ENCODE measurements at regions of chr1 and their contacts with region 1.

Region 1: DNA sequence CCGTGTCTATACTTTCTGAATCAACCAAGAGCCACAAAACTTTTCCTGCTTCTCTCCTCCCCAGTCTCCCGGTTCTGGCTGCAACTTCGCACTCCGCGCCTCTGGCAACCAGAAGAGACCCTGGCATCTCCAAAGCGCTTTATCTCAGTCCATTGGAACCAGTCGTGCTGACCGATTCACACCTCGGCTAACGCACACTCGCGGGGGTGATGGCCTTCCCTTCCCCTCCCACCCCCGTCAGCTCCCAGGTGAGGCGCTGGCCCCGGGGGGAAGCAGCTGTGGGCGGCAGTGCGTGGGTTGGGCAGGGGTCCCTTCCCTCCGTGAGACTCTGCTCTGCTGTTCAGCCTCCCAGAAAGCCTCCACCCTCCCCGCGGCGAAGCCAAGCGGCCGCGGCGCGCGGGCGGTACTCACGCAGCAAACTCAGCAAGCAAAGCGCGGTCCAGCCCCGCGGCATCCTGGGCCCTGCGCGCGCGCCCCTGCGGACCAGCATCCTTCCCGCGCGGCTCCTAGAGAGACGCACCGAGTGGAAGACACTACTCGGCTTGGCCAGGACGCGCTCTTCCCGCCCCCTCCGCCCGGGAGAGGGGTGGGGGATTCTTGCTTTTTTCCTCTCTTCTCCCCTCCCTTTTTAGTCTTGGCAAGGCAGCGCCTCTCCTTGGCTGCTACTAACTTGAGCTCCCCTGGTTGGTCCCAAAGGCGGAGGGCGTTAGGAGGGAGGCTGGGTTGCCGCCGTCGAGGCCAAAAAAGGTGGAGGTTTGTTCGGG is at the start of gene CD34:
- DNase-seq: peak; percentile 70 to 84 (median 79)
- ATAC-seq: peak; percentile 46 to 75 (median 68)
- H3K4me3 ChIP-seq: peak within 1 kb of the TSS; percentile 24 to 88 (median 72)
- H3K27ac ChIP-seq: peak within 1 kb of the TSS; percentile 75 to 98 (median 90)
- H3K4me1 ChIP-seq: peaks cover 0 to 61% (median 26%) of the 10 kb centered on the region in 12 donors
- H3K27me3 ChIP-seq: peaks cover 0 to 29% (median 0%) of the 10 kb centered on the region in 9 donors
- CTCF ChIP-seq: no peak
- POLR2A ChIP-seq: peak in 1 of 2 donors; percentile 62
- total RNA-seq, gene CD34: 43.6 to 103 (median 63.8) TPM

Region 2: DNA sequence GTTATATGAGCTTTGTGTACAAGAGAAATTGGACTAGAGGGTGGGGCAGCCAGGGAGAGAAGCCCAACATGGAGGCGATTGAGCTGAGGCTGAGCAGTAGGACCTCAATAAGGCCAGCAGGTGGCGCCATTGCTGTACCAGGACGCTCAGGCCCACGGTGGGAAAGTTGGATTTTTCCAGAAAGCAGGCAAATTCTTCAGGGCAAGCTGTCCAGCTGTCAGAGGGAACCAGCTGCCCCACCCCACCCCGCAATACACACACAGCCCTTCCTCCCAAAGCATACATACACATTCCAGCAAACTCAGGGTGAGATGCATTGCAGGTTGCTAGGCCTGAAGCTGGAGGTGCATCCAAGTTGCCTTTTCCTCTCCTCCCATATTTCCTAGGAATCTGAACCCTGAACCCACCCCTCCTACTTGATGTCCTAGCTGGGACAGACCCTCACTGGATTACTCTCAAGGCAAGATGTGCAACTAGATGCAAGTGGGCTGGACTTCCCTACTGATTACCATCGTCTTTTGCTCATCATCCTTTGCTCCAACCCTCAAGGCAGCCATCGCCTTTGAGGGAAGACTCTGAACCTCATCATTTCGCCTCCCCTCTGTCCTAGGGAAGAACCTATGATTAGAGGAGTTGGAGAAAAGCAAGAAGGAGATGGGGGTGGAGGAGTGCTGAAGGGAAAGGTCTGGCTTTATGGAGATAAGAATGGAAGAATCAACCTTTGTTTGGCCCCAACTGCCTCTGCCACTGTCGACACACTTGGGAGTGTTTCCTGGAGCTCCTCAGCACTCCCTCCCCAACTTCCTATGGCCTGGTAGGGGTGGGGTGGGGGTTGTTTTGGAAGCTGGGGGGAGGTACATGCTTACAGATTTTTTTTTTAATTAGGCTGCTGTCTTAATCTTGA is 25.4 kb before region 1 on chr1:
- intact Hi-C with region 1: loop called in 2 of 10 experiments (anchors 2 kb)
- DNase-seq: peak; percentile 85 to 91 (median 87)
- ATAC-seq: peak; percentile 84 to 93 (median 90)
- H3K4me3 ChIP-seq: no peak overlapping the region
- H3K27ac ChIP-seq: peak overlapping the region in 11 of 12 donors; percentile 51 to 91 (median 74)
- H3K4me1 ChIP-seq: peaks cover 16 to 84% (median 56%) of the 10 kb centered on the region in 12 donors
- H3K27me3 ChIP-seq: no peaks in the 10 kb centered on the region
- CTCF ChIP-seq: peak; percentile 93 to 98 (median 96)
- POLR2A ChIP-seq: peak in 1 of 2 donors; percentile 10

Region 3: DNA sequence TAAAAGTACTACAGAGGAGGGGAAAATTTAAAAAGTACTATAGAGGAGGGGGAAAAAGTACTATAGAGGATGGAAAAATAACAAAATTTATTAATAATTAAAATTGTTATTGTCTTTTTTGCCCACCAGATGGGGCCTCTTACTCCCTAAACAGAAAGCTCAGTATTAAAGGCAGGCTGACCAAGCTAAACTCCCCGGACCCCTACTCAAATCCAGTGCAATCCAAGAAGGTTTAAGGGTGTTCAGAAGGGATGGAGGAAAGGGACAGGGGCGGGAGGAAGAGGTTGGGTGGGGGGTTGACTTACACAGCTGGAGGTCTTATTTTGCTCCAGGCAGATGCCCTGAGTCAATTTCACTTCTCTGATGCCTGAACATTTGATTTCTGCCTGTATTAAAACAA is 13.6 kb before region 1 on chr1:
- intact Hi-C with region 1: loop called in 1 of 10 experiments (anchors 2 kb)
- DNase-seq: no peak
- ATAC-seq: peak in 2 of 4 donors; percentile 25 to 32
- H3K4me3 ChIP-seq: no peak overlapping the region
- H3K27ac ChIP-seq: peak overlapping the region in 9 of 12 donors; percentile 0 to 44 (median 23)
- H3K4me1 ChIP-seq: peaks cover 0 to 90% (median 34%) of the 10 kb centered on the region in 12 donors
- H3K27me3 ChIP-seq: no peaks in the 10 kb centered on the region
- CTCF ChIP-seq: peak in 11 of 12 donors; percentile 9 to 61 (median 43)
- POLR2A ChIP-seq: no peak

Region 4: DNA sequence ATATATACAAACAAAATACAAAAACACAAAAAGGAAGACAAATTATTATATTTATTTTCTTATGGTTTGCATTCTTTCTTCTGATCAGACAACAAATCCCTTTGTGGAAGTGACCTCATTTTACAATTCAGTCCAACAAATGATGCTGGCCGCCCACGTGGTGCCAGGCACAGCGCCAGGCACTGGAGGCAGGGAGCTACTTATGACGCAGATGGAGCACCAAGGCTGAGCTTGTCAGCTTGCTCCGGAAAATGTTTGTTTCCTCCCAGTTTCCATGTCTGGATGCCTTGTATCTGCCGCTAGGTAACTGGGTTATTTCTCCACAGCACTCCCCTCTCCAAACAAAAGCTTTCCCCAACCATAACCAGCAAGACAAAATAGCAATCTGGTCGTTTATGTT is 30.9 kb after region 1 on chr1:
- intact Hi-C with region 1: loop called in 1 of 10 experiments (anchors 1 kb)
- DNase-seq: peak; percentile 83 to 87 (median 87)
- ATAC-seq: peak; percentile 89 to 97 (median 92)
- H3K4me3 ChIP-seq: peak overlapping the region in 7 of 12 donors; percentile 10 to 36 (median 29)
- H3K27ac ChIP-seq: peak overlapping the region; percentile 63 to 94 (median 80)
- H3K4me1 ChIP-seq: peaks cover 0 to 52% (median 10%) of the 10 kb centered on the region in 12 donors
- H3K27me3 ChIP-seq: no peaks in the 10 kb centered on the region
- CTCF ChIP-seq: no peak
- POLR2A ChIP-seq: no peak

Region 5: DNA sequence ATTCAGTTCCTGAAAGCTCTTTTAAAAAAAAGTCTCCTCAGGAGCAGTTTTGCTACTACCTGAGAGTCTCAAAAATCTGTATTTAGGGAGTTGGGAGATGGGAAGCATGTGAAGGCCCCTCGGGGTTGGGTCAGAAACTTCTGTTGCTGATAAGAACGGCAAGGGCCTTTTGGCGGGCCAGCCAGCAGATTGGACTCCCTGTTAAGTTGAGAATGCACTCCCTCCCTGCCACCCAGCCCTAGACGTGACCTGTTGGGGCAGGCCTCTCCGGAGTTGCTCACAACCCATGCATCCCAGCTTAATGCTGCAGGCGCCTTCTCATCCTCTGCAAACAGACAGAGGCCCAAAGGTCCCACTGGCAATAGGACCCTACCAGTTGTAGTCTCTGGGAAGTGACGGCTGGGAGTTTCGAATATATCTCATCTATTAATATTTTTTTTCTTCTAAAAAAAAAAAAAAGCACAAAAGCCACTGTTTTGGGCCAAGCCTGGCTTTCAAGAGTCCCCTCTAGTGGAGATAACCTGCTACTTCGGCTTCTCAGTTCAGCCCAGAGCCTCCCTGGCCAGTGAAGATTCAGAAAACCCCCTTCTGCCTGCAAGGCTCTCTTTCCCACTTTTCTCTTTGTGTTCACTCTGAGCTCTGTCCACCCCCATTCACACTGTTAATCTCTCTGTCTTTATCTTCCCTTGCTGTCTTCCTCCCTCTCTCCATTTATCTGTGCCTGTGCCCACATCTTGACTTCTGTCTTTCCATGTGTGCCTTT is 328.1 kb after region 1 on chr1:
- intact Hi-C with region 1: no loop called
- DNase-seq: peak in 2 of 5 donors; percentile 23 to 44
- ATAC-seq: peak in 3 of 4 donors; percentile 23 to 50 (median 24)
- H3K4me3 ChIP-seq: peak overlapping the region in 8 of 12 donors; percentile 13 to 88 (median 49)
- H3K27ac ChIP-seq: peak overlapping the region in 10 of 12 donors; percentile 24 to 86 (median 46)
- H3K4me1 ChIP-seq: peaks cover 0 to 91% (median 67%) of the 10 kb centered on the region in 12 donors
- H3K27me3 ChIP-seq: peaks cover 0 to 18% (median 0%) of the 10 kb centered on the region in 9 donors
- CTCF ChIP-seq: peak; percentile 65 to 90 (median 78)
- POLR2A ChIP-seq: no peak